CD4-positive, alpha-beta T cell (primary cell): ENCODE measurements at regions of chr6 and their contacts with region 1.

Region 1: DNA sequence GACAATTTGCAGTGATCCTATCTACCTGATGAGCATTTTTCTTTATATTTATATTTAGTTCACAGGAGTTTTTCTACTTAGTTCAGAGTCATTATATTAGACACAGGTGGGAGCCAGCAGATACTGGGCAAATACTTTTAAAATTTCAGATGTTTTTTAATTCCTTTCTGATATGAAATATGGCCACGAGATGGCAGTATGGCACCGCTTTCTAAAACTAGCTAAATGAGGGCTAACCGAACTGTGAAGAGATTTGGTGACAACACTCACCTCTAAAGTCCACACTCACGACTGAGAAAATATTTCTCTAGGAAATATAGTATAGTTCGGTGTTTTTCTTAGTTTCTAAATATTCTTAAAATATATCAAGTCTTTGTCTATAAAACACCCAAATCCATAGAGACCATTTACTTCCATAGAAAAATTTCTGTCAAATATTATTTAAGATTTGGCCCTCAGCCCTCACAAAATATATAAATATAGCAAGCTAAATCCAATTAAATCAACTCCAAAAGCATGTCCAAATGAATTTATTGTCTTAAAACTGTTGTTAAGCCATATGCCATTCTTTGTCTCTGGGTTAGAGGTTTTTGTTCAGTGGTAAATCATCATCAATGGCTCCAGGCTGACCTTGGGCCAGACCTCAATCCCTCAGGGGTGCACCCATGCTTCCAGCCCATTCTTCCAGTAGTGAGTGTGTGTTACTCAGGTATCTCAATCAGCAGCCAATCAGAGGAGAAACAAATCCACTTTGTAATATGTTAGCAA is 63.6 kb downstream of the HUS1B start:
- DNase-seq: peak; percentile 29 to 81 (median 56)
- ATAC-seq: peak; percentile 39
- H3K4me3 ChIP-seq: no peak overlapping the region
- H3K4me3 Mint-ChIP-seq: no peak overlapping the region
- H3K27ac ChIP-seq: no peak overlapping the region
- H3K27ac Mint-ChIP-seq: no peak overlapping the region
- H3K4me1 ChIP-seq: no peaks in the 10 kb centered on the region
- H3K4me1 Mint-ChIP-seq: no peaks in the 10 kb centered on the region
- H3K27me3 ChIP-seq: no peaks in the 10 kb centered on the region
- H3K27me3 Mint-ChIP-seq: no peaks in the 10 kb centered on the region
- CTCF ChIP-seq: peak; percentile 81

Region 2: GRCh38 chr6:188821-189655 is 404.3 kb before region 1 on chr6:
- CTCF ChIA-PET with region 1: interaction called, 6 read pairs
- POLR2A ChIA-PET with region 1: no interaction called
- intact Hi-C with region 1: loop called in 1 of 2 experiments (anchors 2 kb)
- DNase-seq: peak; percentile 58 to 84 (median 72)
- ATAC-seq: peak; percentile 86
- H3K4me3 ChIP-seq: no peak overlapping the region
- H3K4me3 Mint-ChIP-seq: no peak overlapping the region
- H3K27ac ChIP-seq: no peak overlapping the region
- H3K27ac Mint-ChIP-seq: peak overlapping the region; percentile 2
- H3K4me1 ChIP-seq: peaks cover 16% of the 10 kb centered on the region
- H3K4me1 Mint-ChIP-seq: peaks cover 35% of the 10 kb centered on the region
- H3K27me3 ChIP-seq: no peaks in the 10 kb centered on the region
- H3K27me3 Mint-ChIP-seq: no peaks in the 10 kb centered on the region
- CTCF ChIP-seq: peak; percentile 89

Region 3: GRCh38 chr6:582370-582769 is 11.0 kb before region 1 on chr6:
- CTCF ChIA-PET with region 1: interaction called, 12 read pairs
- POLR2A ChIA-PET with region 1: no interaction called
- intact Hi-C with region 1: no loop called
- DNase-seq: no peak
- ATAC-seq: no peak
- H3K4me3 ChIP-seq: no peak overlapping the region
- H3K4me3 Mint-ChIP-seq: no peak overlapping the region
- H3K27ac ChIP-seq: no peak overlapping the region
- H3K27ac Mint-ChIP-seq: no peak overlapping the region
- H3K4me1 ChIP-seq: peaks cover 3% of the 10 kb centered on the region
- H3K4me1 Mint-ChIP-seq: peaks cover 5% of the 10 kb centered on the region
- H3K27me3 ChIP-seq: no peaks in the 10 kb centered on the region
- H3K27me3 Mint-ChIP-seq: no peaks in the 10 kb centered on the region
- CTCF ChIP-seq: no peak

Region 4: DNA sequence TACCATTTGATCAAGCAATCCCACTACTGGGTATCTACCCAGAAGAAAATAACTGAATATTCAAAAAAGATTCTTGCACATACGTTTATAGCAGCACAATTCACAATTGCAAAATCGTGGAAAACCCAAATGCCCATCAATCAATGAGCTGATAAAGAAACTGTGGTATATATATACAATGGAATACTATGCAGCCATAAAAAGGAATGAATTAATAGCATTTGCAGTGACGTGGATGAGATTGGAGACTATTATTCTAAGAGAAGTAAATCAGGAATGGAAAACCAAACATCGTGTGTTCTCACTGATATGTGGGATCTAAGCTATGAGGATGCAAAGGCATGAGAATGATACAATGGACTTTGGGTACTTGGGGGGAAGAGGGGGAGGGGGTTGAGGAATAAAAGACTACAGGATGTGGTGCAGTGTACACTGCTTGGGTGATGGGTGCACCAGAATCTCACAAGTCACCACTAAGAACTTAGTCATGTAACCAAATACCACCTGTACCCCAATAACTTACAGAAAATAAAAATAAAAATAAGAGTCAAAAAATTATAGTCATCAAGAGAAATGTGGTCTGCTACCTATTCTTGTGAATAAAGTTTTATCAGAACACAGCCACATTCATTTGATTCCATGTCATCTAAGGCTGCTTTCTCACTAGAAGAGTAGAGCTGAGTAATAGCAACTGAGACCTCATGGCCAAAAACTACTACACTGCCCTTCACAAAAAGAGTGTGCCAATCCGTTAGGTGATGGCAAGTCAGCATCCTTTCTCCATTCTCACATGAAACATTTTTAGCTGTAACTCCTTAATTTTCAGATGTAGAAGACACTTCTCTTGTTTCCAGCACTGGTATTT is 72.3 kb after region 1 on chr6:
- CTCF ChIA-PET with region 1: no interaction called
- POLR2A ChIA-PET with region 1: no interaction called
- intact Hi-C with region 1: no loop called
- DNase-seq: no peak
- ATAC-seq: no peak
- H3K4me3 ChIP-seq: no peak overlapping the region
- H3K4me3 Mint-ChIP-seq: no peak overlapping the region
- H3K27ac ChIP-seq: no peak overlapping the region
- H3K27ac Mint-ChIP-seq: no peak overlapping the region
- H3K4me1 ChIP-seq: peaks cover 2% of the 10 kb centered on the region
- H3K4me1 Mint-ChIP-seq: peaks cover 72% of the 10 kb centered on the region
- H3K27me3 ChIP-seq: no peaks in the 10 kb centered on the region
- H3K27me3 Mint-ChIP-seq: no peaks in the 10 kb centered on the region
- CTCF ChIP-seq: no peak

Region 5: GRCh38 chr6:786946-787763 is 193.8 kb after region 1 on chr6:
- CTCF ChIA-PET with region 1: no interaction called
- POLR2A ChIA-PET with region 1: no interaction called
- intact Hi-C with region 1: loop called (anchors 5 to 10 kb)
- DNase-seq: peak in 4 of 14 experiments; percentile 4 to 36 (median 18)
- ATAC-seq: no peak
- H3K4me3 ChIP-seq: no peak overlapping the region
- H3K4me3 Mint-ChIP-seq: no peak overlapping the region
- H3K27ac ChIP-seq: no peak overlapping the region
- H3K27ac Mint-ChIP-seq: no peak overlapping the region
- H3K4me1 ChIP-seq: peaks cover 6% of the 10 kb centered on the region
- H3K4me1 Mint-ChIP-seq: peaks cover 12% of the 10 kb centered on the region
- H3K27me3 ChIP-seq: no peaks in the 10 kb centered on the region
- H3K27me3 Mint-ChIP-seq: peaks cover 10% of the 10 kb centered on the region
- CTCF ChIP-seq: peak; percentile 35

Region 6: GRCh38 chr6:1396952-1397868 is 803.9 kb after region 1 on chr6:
- CTCF ChIA-PET with region 1: interaction called, 39 read pairs
- POLR2A ChIA-PET with region 1: interaction called, 5 read pairs
- intact Hi-C with region 1: loop called (anchors 1 kb)
- DNase-seq: peak; percentile 47 to 81 (median 63)
- ATAC-seq: peak; percentile 63
- H3K4me3 ChIP-seq: no peak overlapping the region
- H3K4me3 Mint-ChIP-seq: no peak overlapping the region
- H3K27ac ChIP-seq: no peak overlapping the region
- H3K27ac Mint-ChIP-seq: no peak overlapping the region
- H3K4me1 ChIP-seq: peaks cover 14% of the 10 kb centered on the region
- H3K4me1 Mint-ChIP-seq: peaks cover 12% of the 10 kb centered on the region
- H3K27me3 ChIP-seq: peaks cover 45 to 84% of the 10 kb centered on the region in 2 experiments
- H3K27me3 Mint-ChIP-seq: peaks cover 72% of the 10 kb centered on the region
- CTCF ChIP-seq: peak; percentile 96